Activated T-helper 1 cell treated with anti-CD3 and anti-CD28 coated beads, Interleukin-12 subunit alpha, Interleukin-12 subunit beta, Interleukin-2, Interleukin-4 antibody, amounts not matched to agents 30 ng/mL and 10 ng/mL and 1 ng/mL, durations not matched to agents 14 hours and 24 hours and 36 hours (primary cell): ENCODE measurements at regions of chr17 and their contacts with region 1.

Region 1: GRCh38 chr17:28726226-28727130 is at the start of gene TLCD1:
- DNase-seq: peak; percentile 91
- H3K4me3 Mint-ChIP-seq: peak within 1 kb of the TSS; percentile 97
- H3K27ac Mint-ChIP-seq: peak within 1 kb of the TSS; percentile 98
- H3K4me1 Mint-ChIP-seq: peaks cover 67% of the 10 kb centered on the region
- H3K27me3 Mint-ChIP-seq: no peaks in the 10 kb centered on the region
- total RNA-seq, gene TLCD1: 9.5 and 11.5 TPM in 2 replicates

Region 2: DNA sequence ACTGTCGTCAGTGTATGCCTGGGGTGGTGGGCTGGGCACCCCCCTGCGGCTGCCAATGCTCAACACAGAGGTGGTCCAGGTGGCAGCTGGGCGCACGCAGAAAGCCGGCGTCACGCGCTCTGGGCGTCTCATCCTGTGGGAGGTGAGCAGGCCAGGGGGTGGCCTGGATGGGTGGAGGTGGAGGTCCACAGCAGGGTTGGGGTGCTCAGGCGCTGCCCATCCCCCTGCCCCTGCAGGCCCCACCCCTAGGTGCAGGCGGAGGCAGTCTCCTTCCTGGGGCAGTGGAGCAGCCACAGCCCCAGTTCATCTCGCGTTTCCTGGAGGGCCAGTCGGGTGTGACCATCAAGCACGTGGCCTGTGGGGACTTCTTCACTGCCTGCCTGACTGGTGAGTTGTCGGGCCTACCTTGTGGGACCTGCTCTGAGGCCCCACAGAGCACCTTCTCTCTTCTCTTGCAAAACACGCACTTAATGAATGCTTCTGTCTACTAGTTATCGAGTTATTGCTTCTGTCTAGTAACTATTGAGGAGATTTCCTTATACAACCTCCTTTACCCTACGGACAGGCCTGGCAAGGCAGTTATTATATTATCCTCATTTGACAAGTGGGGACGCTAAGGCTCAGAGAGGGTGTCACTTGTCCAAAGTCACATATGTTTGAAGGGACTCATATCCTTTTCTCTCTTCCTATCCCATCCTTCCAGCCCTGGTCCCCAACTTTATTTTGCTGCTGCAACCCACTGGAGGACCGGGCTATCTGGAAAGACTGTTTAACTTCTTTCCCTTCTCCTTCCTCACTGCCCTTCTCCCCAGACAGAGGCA is 11.6 kb after region 1 on chr17:
- intact Hi-C with region 1: loop called (anchors 1 kb)
- DNase-seq: no peak
- H3K4me3 Mint-ChIP-seq: peak overlapping the region; percentile 73
- H3K27ac Mint-ChIP-seq: peak overlapping the region; percentile 88
- H3K4me1 Mint-ChIP-seq: peaks cover 40% of the 10 kb centered on the region
- H3K27me3 Mint-ChIP-seq: no peaks in the 10 kb centered on the region

Region 3: DNA sequence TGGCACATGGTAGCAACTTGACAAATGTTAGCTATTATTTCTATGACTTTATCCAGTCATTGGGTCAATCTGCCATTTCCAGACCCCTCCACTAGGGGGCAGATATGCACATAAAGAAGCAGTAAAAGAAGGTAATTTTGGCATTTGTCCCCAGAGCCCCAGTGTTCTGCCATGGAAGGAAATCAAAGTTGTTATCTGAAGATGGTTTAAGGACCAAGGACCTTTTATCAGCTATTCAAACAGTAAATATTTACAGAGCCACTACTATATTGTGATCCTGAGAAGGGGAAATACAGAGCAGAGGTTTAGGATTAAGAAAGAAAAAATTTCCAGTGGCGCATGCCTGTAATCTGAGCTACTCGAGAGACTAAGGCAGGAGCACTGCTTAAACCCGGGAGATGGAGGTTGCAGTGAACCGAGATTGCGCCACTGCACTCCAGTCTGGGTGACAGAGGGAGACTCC is 37.4 kb after region 1 on chr17:
- intact Hi-C with region 1: loop called (anchors 1 kb)
- DNase-seq: peak; percentile 63
- H3K4me3 Mint-ChIP-seq: no peak overlapping the region
- H3K27ac Mint-ChIP-seq: peak overlapping the region; percentile 53
- H3K4me1 Mint-ChIP-seq: peaks cover 26% of the 10 kb centered on the region
- H3K27me3 Mint-ChIP-seq: no peaks in the 10 kb centered on the region

Region 4: GRCh38 chr17:28854457-28855350 is 128.2 kb after region 1 on chr17 and contains the start of gene ERAL1:
- intact Hi-C with region 1: loop called (anchors 1 kb)
- DNase-seq: peak; percentile 82
- H3K4me3 Mint-ChIP-seq: peak within 1 kb of the TSS; percentile 85
- H3K27ac Mint-ChIP-seq: peak within 1 kb of the TSS; percentile 88
- H3K4me1 Mint-ChIP-seq: peaks cover 14% of the 10 kb centered on the region
- H3K27me3 Mint-ChIP-seq: no peaks in the 10 kb centered on the region
- total RNA-seq, gene ERAL1: 60.4 and 61.5 TPM in 2 replicates

Region 5: GRCh38 chr17:28925912-28926365 is 199.5 kb after region 1 on chr17:
- intact Hi-C with region 1: loop called (anchors 1 kb)
- DNase-seq: peak; percentile 62
- H3K4me3 Mint-ChIP-seq: peak overlapping the region; percentile 19
- H3K27ac Mint-ChIP-seq: peak overlapping the region; percentile 92
- H3K4me1 Mint-ChIP-seq: peaks cover 58% of the 10 kb centered on the region
- H3K27me3 Mint-ChIP-seq: no peaks in the 10 kb centered on the region

Region 6: GRCh38 chr17:29293890-29294579 is 567.6 kb after region 1 on chr17 and contains the start of gene NUFIP2:
- intact Hi-C with region 1: loop called (anchors 5 kb)
- DNase-seq: peak; percentile 97
- H3K4me3 Mint-ChIP-seq: peak within 1 kb of the TSS; percentile 100
- H3K27ac Mint-ChIP-seq: peak within 1 kb of the TSS; percentile 99
- H3K4me1 Mint-ChIP-seq: peaks cover 43% of the 10 kb centered on the region
- H3K27me3 Mint-ChIP-seq: peaks cover 3% of the 10 kb centered on the region
- total RNA-seq, gene NUFIP2: 92.2 and 95.5 TPM in 2 replicates

Region 7: DNA sequence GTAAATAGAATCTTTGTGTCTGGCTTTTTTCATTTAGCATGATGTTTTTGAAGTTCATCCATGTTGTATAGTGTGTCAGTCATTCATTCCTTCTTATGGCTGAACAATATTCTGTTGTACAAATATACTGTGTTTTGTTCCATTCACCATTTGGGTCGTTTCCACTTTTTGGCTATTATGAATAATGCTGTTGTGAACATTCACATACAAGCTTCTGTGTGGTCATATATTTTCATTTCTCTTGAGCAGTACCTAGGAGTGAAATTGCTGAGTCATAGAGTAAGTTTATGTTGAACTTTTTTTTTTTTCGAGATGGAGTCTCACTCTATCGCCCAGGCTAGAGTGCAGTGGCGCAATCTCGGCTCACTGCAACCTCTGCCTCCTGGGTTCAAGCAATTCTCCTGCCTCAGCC is 631.3 kb after region 1 on chr17:
- intact Hi-C with region 1: no loop called
- DNase-seq: no peak
- H3K4me3 Mint-ChIP-seq: no peak overlapping the region
- H3K27ac Mint-ChIP-seq: peak overlapping the region; percentile 36
- H3K4me1 Mint-ChIP-seq: peaks cover 5% of the 10 kb centered on the region
- H3K27me3 Mint-ChIP-seq: peaks cover 5% of the 10 kb centered on the region